Tibial artery (tissue), 4 donors: ENCODE measurements at regions of chr3 and their contacts with region 1.

Region 1: GRCh38 chr3:99551520-99551919 is 86.9 kb upstream of the COL8A1 start:
- DNase-seq: no peak
- H3K4me3 ChIP-seq: no peak overlapping the region
- H3K27ac ChIP-seq: no peak overlapping the region
- H3K4me1 ChIP-seq: peaks cover 0 to 6% (median 2%) of the 10 kb centered on the region in 4 donors
- H3K27me3 ChIP-seq: no peaks in the 10 kb centered on the region
- CTCF ChIP-seq: no peak

Region 2: DNA sequence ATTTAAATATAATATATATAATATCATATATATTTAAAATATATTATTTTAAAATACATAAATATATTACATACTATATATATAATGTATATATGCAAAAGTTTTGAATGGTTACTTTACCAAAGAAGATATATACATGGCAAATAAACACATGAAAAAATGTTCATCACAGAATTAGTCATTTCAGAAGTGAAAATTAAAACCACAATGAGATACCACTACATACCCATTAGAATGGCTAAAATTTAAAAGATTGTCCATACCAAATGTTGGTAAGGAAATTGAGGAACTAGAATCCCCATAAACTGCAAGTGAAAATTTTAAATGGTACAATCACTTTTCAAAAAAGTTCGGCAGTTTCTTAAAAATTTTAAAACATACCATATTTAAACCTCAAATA is 63.2 kb after region 1 on chr3:
- intact Hi-C with region 1: loop called (anchors 10 kb)
- DNase-seq: no peak
- H3K4me3 ChIP-seq: no peak overlapping the region
- H3K27ac ChIP-seq: no peak overlapping the region
- H3K4me1 ChIP-seq: no peaks in the 10 kb centered on the region
- H3K27me3 ChIP-seq: no peaks in the 10 kb centered on the region
- CTCF ChIP-seq: no peak